HCT116 (cell line): ENCODE measurements at regions of chr2 and their contacts with region 1.

Region 1: GRCh38 chr2:186460465-186460864 is 25.6 kb upstream of the ZC3H15 start:
- DNase-seq: no peak
- ATAC-seq: peak; percentile 70
- H3K4me3 ChIP-seq: no peak overlapping the region
- H3K27ac ChIP-seq: no peak overlapping the region
- H3K4me1 ChIP-seq: no peaks in the 10 kb centered on the region
- H3K27me3 ChIP-seq: no peaks in the 10 kb centered on the region
- CTCF ChIP-seq: peak; percentile 31 to 60 (median 38); a peak in 5 of 6 replicates
- POLR2A ChIP-seq: no peak
- RAD21 ChIP-seq: peak; percentile 67

Region 2: DNA sequence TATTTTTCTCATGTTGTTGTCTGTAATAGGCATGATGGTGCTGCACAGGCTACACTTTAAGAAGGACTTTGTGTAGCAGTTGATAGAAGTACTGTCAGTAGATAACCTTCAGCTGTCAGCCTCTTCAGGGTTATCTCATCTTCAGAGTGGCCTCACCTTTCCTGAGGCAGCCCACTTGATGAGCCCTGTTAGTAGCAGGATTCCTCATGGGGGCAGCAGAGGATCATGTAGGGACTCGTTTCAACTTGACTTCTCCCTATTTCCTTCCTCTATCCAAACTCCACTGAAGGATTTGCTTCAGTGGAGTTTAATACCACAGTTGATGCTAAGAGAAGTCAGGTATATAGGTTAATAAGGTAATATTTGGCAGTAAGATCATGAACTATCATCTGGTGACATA is 1252.2 kb before region 1 on chr2:
- CTCF ChIA-PET with region 1: interaction called, 3 read pairs
- POLR2A ChIA-PET with region 1: no interaction called
- RAD21 ChIA-PET with region 1: no interaction called
- intact Hi-C with region 1: loop called (anchors 1 kb)
- DNase-seq: peak; percentile 45
- ATAC-seq: peak; percentile 95
- H3K4me3 ChIP-seq: no peak overlapping the region
- H3K27ac ChIP-seq: no peak overlapping the region
- H3K4me1 ChIP-seq: no peaks in the 10 kb centered on the region
- H3K27me3 ChIP-seq: no peaks in the 10 kb centered on the region
- CTCF ChIP-seq: peak; percentile 45 to 71 (median 68); a peak in 5 of 6 replicates
- POLR2A ChIP-seq: no peak
- RAD21 ChIP-seq: peak; percentile 80

Region 3: GRCh38 chr2:185291035-185291647 is 1169.3 kb before region 1 on chr2:
- CTCF ChIA-PET with region 1: no interaction called
- POLR2A ChIA-PET with region 1: no interaction called
- RAD21 ChIA-PET with region 1: no interaction called
- intact Hi-C with region 1: loop called (anchors 1 kb)
- DNase-seq: peak; percentile 40
- ATAC-seq: peak; percentile 99
- H3K4me3 ChIP-seq: no peak overlapping the region
- H3K27ac ChIP-seq: no peak overlapping the region
- H3K4me1 ChIP-seq: no peaks in the 10 kb centered on the region
- H3K27me3 ChIP-seq: no peaks in the 10 kb centered on the region
- CTCF ChIP-seq: peak; percentile 23 to 77 (median 65); a peak in 5 of 6 replicates
- POLR2A ChIP-seq: no peak
- RAD21 ChIP-seq: peak; percentile 67

Region 4: GRCh38 chr2:185608799-185609198 is 851.7 kb before region 1 on chr2:
- CTCF ChIA-PET with region 1: interaction called, 3 read pairs
- POLR2A ChIA-PET with region 1: no interaction called
- RAD21 ChIA-PET with region 1: no interaction called
- intact Hi-C with region 1: loop called (anchors 10 kb)
- DNase-seq: peak; percentile 8
- ATAC-seq: peak; percentile 44; the same call in 1 of the 2 replicates
- H3K4me3 ChIP-seq: no peak overlapping the region
- H3K27ac ChIP-seq: no peak overlapping the region
- H3K4me1 ChIP-seq: no peaks in the 10 kb centered on the region
- H3K27me3 ChIP-seq: no peaks in the 10 kb centered on the region
- CTCF ChIP-seq: peak; percentile 35 to 54 (median 38); a peak in 4 of 6 replicates
- POLR2A ChIP-seq: no peak
- RAD21 ChIP-seq: peak; percentile 69

Region 5: GRCh38 chr2:185979546-185980071 is 480.9 kb before region 1 on chr2:
- CTCF ChIA-PET with region 1: no interaction called
- POLR2A ChIA-PET with region 1: no interaction called
- RAD21 ChIA-PET with region 1: no interaction called
- intact Hi-C with region 1: loop called (anchors 10 kb)
- DNase-seq: peak; percentile 57
- ATAC-seq: peak; percentile 93
- H3K4me3 ChIP-seq: no peak overlapping the region
- H3K27ac ChIP-seq: peak overlapping the region; percentile 22; the same call in 1 of the 2 replicates
- H3K4me1 ChIP-seq: peaks cover 7 to 18% of the 10 kb centered on the region in 2 experiments; a peak in 3 of 4 replicates
- H3K27me3 ChIP-seq: no peaks in the 10 kb centered on the region
- CTCF ChIP-seq: peak in 2 of 3 experiments; percentile 10 to 32; a peak in 2 of 6 replicates
- POLR2A ChIP-seq: no peak
- RAD21 ChIP-seq: peak; percentile 59

Region 6: GRCh38 chr2:186440537-186440936 is 19.9 kb before region 1 on chr2:
- CTCF ChIA-PET with region 1: no interaction called
- POLR2A ChIA-PET with region 1: no interaction called
- RAD21 ChIA-PET with region 1: no interaction called
- intact Hi-C with region 1: no loop called
- DNase-seq: no peak
- ATAC-seq: no peak
- H3K4me3 ChIP-seq: no peak overlapping the region
- H3K27ac ChIP-seq: no peak overlapping the region
- H3K4me1 ChIP-seq: no peaks in the 10 kb centered on the region
- H3K27me3 ChIP-seq: no peaks in the 10 kb centered on the region
- CTCF ChIP-seq: no peak
- POLR2A ChIP-seq: no peak
- RAD21 ChIP-seq: no peak